IMR-90 (cell line): ENCODE measurements at regions of chr7 and their contacts with region 1.

Region 1: DNA sequence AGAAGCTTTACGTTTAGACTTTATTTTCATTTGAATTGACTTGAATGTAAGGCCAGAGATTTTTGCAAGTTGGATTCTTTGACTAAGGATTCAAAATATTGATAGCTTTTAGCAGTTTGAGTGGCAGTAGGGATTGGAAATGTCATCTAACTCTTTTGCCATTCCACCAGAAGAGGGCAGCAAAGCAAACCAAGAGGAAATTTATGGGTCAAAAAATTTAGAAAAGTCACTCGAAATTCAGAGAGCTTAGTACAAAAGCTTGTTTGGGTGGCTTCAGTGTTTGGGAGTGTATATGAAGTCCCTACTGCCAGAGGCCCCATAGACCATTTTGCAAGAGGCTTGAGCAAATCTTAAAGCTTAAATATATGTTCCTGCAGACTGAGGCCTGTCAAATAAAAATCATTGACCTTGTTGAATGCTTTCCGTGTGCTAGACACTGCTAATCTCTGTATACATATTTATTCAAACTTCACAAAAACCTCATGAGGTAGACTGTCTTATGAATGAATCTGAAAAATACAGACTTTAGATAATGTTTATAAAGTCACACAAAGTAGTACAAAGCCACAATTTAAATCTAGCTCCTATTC is 44.6 kb upstream of the RSBN1L start:
- DNase-seq: peak; percentile 47
- ATAC-seq: peak; percentile 19; the same call in 1 of the 2 replicates
- H3K4me3 ChIP-seq: no peak overlapping the region
- H3K27ac ChIP-seq: no peak overlapping the region
- H3K4me1 ChIP-seq: peaks cover 6% of the 10 kb centered on the region; the same call in 1 of the 2 replicates
- H3K27me3 ChIP-seq: no peaks in the 10 kb centered on the region
- CTCF ChIP-seq: peak; percentile 65
- POLR2A ChIP-seq: no peak
- RAD21 ChIP-seq: peak; percentile 64

Region 2: DNA sequence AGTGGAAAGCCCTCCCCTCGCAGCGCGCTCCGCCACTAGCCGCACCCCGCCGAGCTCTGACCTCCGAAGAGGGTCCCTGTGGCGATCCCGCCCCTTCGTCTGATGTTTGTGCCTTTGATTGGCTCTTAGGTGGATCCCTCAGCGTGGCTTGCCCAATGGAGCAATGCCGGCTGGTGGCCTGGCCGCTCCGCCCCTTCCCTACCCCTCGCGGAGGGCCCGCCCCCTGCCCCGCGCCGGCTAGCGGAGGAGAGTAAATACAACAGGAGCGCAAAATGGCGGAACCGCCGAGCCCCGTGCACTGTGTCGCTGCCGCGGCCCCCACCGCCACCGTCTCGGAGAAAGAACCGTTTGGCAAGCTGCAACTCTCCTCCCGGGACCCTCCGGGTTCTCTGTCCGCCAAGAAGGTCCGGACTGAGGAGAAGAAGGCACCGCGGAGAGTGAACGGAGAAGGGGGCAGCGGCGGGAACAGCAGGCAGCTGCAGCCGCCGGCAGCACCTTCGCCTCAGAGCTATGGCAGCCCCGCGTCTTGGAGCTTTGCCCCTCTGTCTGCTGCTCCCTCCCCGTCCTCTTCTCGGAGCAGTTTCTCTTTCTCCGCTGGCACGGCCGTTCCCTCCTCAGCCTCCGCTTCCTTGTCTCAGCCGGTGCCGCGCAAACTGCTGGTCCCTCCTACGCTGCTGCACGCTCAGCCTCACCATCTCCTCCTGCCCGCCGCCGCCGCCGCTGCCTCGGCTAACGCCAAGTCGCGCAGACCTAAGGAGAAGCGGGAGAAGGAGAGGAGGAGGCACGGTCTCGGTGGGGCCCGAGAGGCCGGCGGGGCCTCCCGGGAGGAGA is 44.7 kb after region 1 on chr7 and contains the start of gene RSBN1L:
- CTCF ChIA-PET with region 1: interaction called, 12 read pairs
- POLR2A ChIA-PET with region 1: no interaction called
- dilution Hi-C with region 1: no loop called
- in situ Hi-C with region 1: no loop called
- intact Hi-C with region 1: no loop called
- DNase-seq: peak; percentile 97
- ATAC-seq: peak; percentile 98
- H3K4me3 ChIP-seq: peak within 1 kb of the TSS; percentile 91
- H3K27ac ChIP-seq: peak within 1 kb of the TSS; percentile 92
- H3K4me1 ChIP-seq: no peaks in the 10 kb centered on the region
- H3K27me3 ChIP-seq: no peaks in the 10 kb centered on the region
- CTCF ChIP-seq: peak; percentile 39
- POLR2A ChIP-seq: peak; percentile 79
- RAD21 ChIP-seq: peak; percentile 7; the same call in 1 of the 2 replicates
- total RNA-seq, gene RSBN1L: 14.7 and 23.6 TPM in 2 replicates

Region 3: DNA sequence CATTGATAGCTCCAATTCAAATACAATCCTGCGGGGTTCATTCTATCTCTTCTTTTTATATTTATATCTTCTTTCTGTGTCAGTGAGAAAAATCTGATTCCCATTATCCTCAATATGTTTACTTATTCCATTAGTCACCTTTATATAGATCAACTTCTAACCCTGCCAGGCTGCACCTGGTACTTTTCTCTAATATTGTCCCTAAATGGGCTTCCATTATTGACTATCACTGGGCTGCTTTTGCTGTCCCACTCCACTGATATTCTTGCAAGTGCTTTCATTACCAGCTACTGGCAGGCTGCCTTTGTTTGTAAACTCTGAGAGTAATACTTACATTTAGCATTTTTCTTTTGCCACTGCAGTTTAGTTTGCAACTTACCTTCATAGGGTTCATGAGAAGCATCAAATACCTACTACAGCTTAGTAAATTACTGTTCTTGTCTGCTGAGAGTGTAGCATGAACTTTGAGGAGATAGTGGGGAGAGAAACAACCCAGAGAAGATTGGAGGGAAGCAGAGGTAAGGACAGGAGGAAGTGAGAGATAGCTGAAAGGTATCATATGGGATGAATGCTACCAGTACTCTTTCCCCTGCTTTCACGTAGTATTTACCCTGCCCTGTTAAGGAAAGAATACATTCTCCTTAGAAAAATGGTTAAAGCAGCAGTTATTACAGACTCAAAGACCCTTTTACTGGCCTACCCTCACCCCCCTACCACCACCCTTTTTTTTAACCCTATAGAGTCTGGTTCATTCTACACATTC is 266.0 kb after region 1 on chr7:
- CTCF ChIA-PET with region 1: interaction called, 4 read pairs
- POLR2A ChIA-PET with region 1: no interaction called
- dilution Hi-C with region 1: no loop called
- in situ Hi-C with region 1: no loop called
- intact Hi-C with region 1: loop called (anchors 5 kb)
- DNase-seq: peak; percentile 14
- ATAC-seq: peak; percentile 42
- H3K4me3 ChIP-seq: no peak overlapping the region
- H3K27ac ChIP-seq: no peak overlapping the region
- H3K4me1 ChIP-seq: peaks cover 2% of the 10 kb centered on the region; the same call in 1 of the 2 replicates
- H3K27me3 ChIP-seq: no peaks in the 10 kb centered on the region
- CTCF ChIP-seq: no peak
- POLR2A ChIP-seq: no peak
- RAD21 ChIP-seq: no peak